Sciatic nerve (tissue), 2 donors: ENCODE measurements at regions of chr22 and their contacts with region 1.

Region 1: GRCh38 chr22:49929208-49930136 is 11.0 kb downstream of the CRELD2 start:
- DNase-seq: no peak
- ATAC-seq: peak; percentile 40

Region 2: GRCh38 chr22:49970528-49971231 is 41.2 kb after region 1 on chr22:
- intact Hi-C with region 1: loop called (anchors 10 kb)
- DNase-seq: peak; percentile 94
- ATAC-seq: peak; percentile 87

Region 3: GRCh38 chr22:50018608-50019285 is 89.3 kb after region 1 on chr22:
- intact Hi-C with region 1: no loop called
- DNase-seq: peak; percentile 31
- ATAC-seq: no peak

Region 4: GRCh38 chr22:50030297-50031188 is 101.1 kb after region 1 on chr22:
- intact Hi-C with region 1: loop called (anchors 2 kb)
- DNase-seq: peak; percentile 83
- ATAC-seq: peak; percentile 86